ENCODE measurements at regions of chr5 and their contacts with region 1.

Region 1: GRCh38 chr5:178120868-178121357 is 7.6 kb downstream of the N4BP3 start:
- DNase-seq: peak; percentile 83
- ATAC-seq: peak; percentile 62
- H3K4me3 Mint-ChIP-seq: no peak overlapping the region
- H3K27ac Mint-ChIP-seq: peak overlapping the region; percentile 57; the same call in 1 of the 2 replicates
- H3K4me1 Mint-ChIP-seq: peaks cover 65% of the 10 kb centered on the region
- H3K27me3 Mint-ChIP-seq: no peaks in the 10 kb centered on the region
- CTCF ChIP-seq: peak; percentile 51; the same call in 1 of the 2 replicates

Region 2: GRCh38 chr5:177994561-177995190 is 126.2 kb before region 1 on chr5:
- CTCF ChIA-PET with region 1: no interaction called
- POLR2A ChIA-PET with region 1: no interaction called
- DNase-seq: no peak
- ATAC-seq: no peak
- H3K4me3 Mint-ChIP-seq: no peak overlapping the region
- H3K27ac Mint-ChIP-seq: no peak overlapping the region; the same call in 1 of the 2 replicates
- H3K4me1 Mint-ChIP-seq: peaks cover 13% of the 10 kb centered on the region
- H3K27me3 Mint-ChIP-seq: peaks cover 5% of the 10 kb centered on the region; the same call in 1 of the 2 replicates
- CTCF ChIP-seq: no peak

Region 3: DNA sequence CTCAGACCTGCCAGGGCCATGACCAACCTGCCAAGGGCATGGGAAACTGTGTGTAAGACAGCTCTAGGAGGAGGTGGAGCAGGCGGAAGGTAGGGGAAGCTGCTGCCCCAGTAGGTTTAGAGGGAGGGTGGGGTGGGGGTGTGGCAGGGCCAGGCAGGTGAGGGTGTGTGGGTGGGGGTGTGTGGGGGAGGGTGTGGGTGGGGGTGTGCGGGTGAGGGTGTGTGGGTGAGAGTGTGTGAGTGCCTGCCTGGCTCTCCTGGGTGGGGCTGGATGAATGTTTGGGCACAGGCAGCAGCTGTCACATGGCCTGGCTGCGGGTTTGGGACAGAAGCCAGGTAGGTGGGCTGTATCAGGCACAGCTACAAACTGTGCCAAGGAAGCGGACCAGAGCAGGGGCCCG is 16.4 kb before region 1 on chr5:
- CTCF ChIA-PET with region 1: interaction called, 23 read pairs
- POLR2A ChIA-PET with region 1: no interaction called
- DNase-seq: no peak
- ATAC-seq: no peak
- H3K4me3 Mint-ChIP-seq: no peak overlapping the region
- H3K27ac Mint-ChIP-seq: no peak overlapping the region
- H3K4me1 Mint-ChIP-seq: peaks cover 15% of the 10 kb centered on the region
- H3K27me3 Mint-ChIP-seq: no peaks in the 10 kb centered on the region; the same call in 1 of the 2 replicates
- CTCF ChIP-seq: no peak

Region 4: DNA sequence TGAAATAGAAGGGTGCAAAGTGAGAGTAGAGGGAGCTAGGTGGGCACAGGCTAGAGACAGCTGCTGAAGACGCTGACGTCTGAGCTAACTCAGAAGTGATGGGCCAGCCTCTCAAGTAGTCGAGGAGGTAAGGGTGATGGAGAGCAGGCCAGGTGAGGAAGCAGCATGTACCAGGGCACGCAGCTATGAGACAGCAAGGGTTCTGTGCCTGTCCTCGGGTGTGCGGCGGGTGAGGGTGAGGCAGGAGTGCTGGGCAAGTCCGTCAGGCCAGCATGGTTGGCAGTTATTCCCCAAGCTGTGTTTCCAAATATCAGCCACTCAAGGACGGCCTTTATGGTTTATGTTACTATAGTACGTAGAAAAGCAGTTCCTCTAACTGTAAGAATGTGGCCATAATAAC is 16.1 kb after region 1 on chr5:
- CTCF ChIA-PET with region 1: interaction called, 34 read pairs
- POLR2A ChIA-PET with region 1: interaction called, 10 read pairs
- DNase-seq: no peak
- ATAC-seq: no peak
- H3K4me3 Mint-ChIP-seq: no peak overlapping the region
- H3K27ac Mint-ChIP-seq: peak overlapping the region; percentile 78
- H3K4me1 Mint-ChIP-seq: peaks cover 23% of the 10 kb centered on the region
- H3K27me3 Mint-ChIP-seq: no peaks in the 10 kb centered on the region
- CTCF ChIP-seq: no peak

Region 5: GRCh38 chr5:178146020-178146820 is 25.3 kb after region 1 on chr5:
- CTCF ChIA-PET with region 1: interaction called, 39 read pairs
- POLR2A ChIA-PET with region 1: interaction called, 3 read pairs
- DNase-seq: peak; percentile 92
- ATAC-seq: peak; percentile 86
- H3K4me3 Mint-ChIP-seq: no peak overlapping the region
- H3K27ac Mint-ChIP-seq: peak overlapping the region; percentile 94
- H3K4me1 Mint-ChIP-seq: peaks cover 5% of the 10 kb centered on the region
- H3K27me3 Mint-ChIP-seq: no peaks in the 10 kb centered on the region
- CTCF ChIP-seq: peak; percentile 64

Region 6: DNA sequence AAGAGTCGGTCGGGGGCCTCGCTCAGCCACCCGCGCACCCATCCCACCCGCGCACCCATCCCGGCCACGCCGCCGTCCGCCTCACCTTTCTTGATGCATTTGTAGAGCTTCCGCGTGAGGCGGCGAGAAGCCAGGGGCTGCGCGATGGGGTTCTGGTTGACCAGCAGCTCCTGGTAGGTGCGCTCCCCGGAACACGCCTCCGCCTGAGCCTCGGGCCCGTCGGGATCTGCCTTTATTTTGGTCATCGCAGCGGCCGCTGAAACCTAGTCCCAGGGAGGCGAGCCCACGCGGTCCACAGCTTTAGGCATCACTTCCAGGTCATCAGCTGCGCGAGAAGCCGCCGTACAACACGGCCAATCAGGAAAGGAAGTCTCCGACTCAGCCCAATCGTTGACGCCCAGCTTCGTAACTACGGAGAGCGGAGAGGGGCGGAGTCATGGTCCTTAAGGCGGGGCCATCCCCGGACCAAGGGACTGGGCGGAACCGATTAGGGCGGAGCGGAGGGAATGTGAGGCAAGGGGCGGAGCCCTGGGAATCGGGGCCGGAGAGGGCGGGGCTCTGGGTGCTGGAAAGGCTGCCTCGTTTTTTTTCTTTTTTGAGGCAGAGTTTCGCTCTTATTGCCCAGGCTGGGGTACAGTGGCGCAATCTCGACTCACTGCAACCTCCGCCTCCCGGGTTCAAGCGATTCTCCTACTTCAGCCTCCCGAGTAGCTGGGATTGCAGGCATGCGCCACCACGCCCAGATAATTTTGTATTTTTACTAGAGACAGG is 32.8 kb after region 1 on chr5 and contains the start of gene NHP2:
- CTCF ChIA-PET with region 1: interaction called, 24 read pairs
- POLR2A ChIA-PET with region 1: interaction called, 5 read pairs
- DNase-seq: peak; percentile 99
- ATAC-seq: peak; percentile 96
- H3K4me3 Mint-ChIP-seq: peak within 1 kb of the TSS; percentile 94
- H3K27ac Mint-ChIP-seq: peak within 1 kb of the TSS; percentile 94
- H3K4me1 Mint-ChIP-seq: peaks cover 13% of the 10 kb centered on the region
- H3K27me3 Mint-ChIP-seq: no peaks in the 10 kb centered on the region
- CTCF ChIP-seq: no peak
- total RNA-seq, gene NHP2: 263 to 269 TPM (median 264 TPM) in 3 replicates

Region 7: DNA sequence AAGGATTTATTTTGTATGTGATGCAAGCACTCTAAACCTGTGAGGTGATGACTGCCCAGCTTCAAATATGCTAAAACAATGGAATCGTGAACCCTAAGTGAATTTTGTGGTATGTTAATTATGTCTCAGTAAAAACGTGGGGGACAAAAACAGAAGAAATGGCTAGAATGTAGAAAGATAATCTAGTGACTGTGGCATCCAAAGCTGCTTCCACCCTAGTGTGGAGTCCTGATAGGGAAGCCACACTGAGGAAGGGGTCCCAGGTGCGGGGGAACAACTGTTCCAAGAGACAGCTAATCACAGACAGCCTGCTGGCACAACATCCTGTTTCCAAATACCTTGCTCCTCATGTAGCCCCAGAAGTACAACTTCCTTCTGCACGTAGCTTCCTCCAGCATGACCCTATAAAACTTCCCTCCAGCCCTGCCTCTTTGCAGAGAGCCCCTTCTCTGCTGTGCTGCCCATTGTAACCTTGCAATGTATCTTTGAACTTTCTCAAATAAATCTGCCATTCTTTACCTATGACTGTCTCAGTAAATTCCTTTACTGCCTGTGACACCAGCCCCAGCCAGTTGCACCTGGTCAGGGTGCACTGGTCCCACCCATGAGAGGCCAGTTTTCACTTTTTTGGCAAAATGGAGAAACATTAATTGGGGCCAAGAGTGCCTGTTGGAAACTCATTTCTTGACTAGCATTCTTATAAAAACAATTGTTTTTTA is 61.4 kb after region 1 on chr5:
- CTCF ChIA-PET with region 1: interaction called, 11 read pairs
- POLR2A ChIA-PET with region 1: interaction called, 5 read pairs
- DNase-seq: no peak
- ATAC-seq: no peak
- H3K4me3 Mint-ChIP-seq: no peak overlapping the region; the same call in 1 of the 2 replicates
- H3K27ac Mint-ChIP-seq: peak overlapping the region; percentile 85
- H3K4me1 Mint-ChIP-seq: peaks cover 43% of the 10 kb centered on the region
- H3K27me3 Mint-ChIP-seq: no peaks in the 10 kb centered on the region
- CTCF ChIP-seq: no peak

Measured in WTC11 (cell line).